Stomach (tissue), 19 donors: ENCODE measurements at regions of chr20 and their contacts with region 1.

Region 1: DNA sequence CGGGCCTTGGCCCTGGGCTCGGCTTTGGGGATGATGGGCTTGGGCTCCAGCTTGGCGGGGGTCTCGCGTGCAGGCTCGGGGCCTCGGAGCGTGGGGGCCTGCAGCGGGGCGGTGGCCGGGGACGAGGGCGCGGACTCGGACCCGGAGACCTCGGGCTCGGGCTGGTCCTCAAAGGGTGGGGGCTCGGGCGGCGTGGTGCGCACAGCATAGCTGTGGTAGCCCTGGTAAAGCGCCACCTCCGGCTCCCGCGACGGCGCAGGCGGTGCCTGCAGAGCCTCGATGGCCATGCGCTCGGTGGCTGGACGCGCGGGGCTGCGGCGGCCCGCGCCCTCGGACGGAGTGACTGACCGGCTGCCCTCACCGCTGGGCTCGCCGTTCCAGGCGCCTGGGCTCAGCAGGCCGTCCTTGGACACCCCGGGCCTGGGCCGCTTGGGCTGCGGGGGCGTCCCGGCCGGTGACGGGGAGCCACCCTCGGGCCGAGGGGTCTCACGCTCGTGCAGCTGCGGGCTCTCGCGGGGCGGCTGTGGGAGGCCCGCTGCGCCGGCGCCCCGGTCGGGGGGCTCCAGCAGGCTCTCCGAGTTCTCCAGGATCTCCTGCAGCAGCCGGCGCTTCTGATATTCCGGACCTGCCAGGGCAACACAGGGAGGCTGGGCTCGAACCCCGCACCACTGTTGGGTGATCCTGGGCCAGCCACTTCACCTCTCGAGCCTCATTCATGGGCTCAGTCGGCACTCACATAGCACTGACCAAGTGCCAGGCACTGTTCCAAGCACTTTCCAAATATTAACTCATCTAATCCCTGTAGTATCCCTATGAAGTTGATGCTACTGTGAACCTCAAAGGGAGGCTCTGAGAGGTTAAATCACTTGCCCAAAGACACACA is 71.0 kb downstream of the JPH2 start:
- DNase-seq: no peak
- H3K4me3 ChIP-seq: no peak overlapping the region
- H3K27ac ChIP-seq: peak overlapping the region in 2 of 5 donors; percentile 45 to 55
- H3K4me1 ChIP-seq: peaks cover 6 to 40% (median 16%) of the 10 kb centered on the region in 4 donors
- H3K27me3 ChIP-seq: peaks cover 0 to 30% (median 14%) of the 10 kb centered on the region in 3 donors
- CTCF ChIP-seq: no peak
- EP300 ChIP-seq: no peak
- POLR2A ChIP-seq: no peak

Region 2: GRCh38 chr20:44038681-44039123 is 77.3 kb before region 1 on chr20:
- intact Hi-C with region 1: no loop called
- DNase-seq: peak; percentile 21 to 70
- H3K4me3 ChIP-seq: no peak overlapping the region
- H3K27ac ChIP-seq: no peak overlapping the region
- H3K4me1 ChIP-seq: no peaks in the 10 kb centered on the region
- H3K27me3 ChIP-seq: peaks cover 0 to 40% (median 0%) of the 10 kb centered on the region in 3 donors
- CTCF ChIP-seq: no peak
- EP300 ChIP-seq: no peak
- POLR2A ChIP-seq: no peak

Region 3: DNA sequence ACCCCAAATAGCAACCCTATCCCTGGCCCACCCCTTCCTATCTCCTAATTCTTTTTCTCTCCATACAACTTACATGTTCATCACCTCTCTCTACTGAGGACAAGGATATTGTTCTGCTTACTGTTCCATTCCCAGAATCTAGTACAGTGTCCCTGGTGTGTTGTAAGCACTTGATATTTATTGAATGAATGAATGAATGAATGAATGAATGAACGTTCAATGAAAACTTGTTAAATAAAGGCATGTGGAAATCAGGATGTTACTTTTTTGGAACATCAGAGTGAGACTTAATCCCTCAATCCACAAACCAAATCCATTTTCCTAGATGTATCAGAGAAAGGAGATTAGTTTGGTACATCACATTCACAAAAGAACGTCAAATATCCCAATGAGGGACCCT is 77.8 kb after region 1 on chr20:
- intact Hi-C with region 1: loop called (anchors 5 kb)
- DNase-seq: no peak
- H3K4me3 ChIP-seq: no peak overlapping the region
- H3K27ac ChIP-seq: no peak overlapping the region
- H3K4me1 ChIP-seq: peaks cover 0 to 14% (median 5%) of the 10 kb centered on the region in 4 donors
- H3K27me3 ChIP-seq: no peaks in the 10 kb centered on the region
- CTCF ChIP-seq: no peak
- EP300 ChIP-seq: no peak
- POLR2A ChIP-seq: no peak